Dorsolateral prefrontal cortex (tissue), 120 donors: ENCODE measurements at regions of chr1 and their contacts with region 1.

Region 1: DNA sequence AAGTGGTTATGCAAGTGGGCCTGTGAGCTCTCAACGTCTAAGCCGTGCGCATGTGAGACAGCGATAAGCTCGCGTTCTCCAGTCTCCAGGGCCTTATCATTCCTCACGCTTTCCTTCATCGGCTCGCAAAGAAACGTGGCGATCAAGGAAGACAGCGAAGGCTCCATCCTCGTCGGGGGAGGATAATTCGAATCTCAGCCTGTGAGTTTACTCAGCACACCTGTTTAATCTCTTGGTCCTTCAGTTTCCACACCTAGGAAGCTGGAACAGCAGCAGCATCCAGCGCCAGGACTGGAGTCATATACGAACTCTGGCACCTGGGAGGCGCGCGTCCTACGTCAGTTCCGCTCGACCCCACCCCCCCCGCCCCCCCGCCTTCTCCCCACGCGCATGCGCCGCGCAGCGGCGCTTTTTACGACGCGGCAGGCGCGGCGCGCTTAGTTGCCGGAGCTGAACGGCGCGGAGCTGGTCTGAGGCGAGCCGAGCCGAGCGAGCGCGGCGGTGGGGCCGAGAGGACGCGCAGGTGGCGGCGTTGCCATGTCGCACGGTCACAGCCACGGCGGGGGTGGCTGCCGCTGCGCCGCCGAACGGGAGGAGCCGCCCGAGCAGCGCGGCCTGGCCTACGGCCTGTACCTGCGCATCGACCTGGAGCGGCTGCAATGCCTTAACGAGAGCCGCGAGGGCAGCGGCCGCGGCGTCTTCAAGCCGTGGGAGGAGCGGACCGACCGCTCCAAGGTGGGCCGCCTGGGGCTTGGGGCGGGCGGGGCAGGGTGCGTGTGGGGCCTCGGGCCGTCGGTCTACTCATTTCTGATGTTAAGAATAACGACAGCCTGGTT is at the start of gene PITHD1:
- DNase-seq: peak; percentile 55 to 85 (median 74)
- H3K4me3 ChIP-seq: peak within 1 kb of the TSS; percentile 53 to 100 (median 96)
- H3K27ac ChIP-seq: peak within 1 kb of the TSS in 58 of 59 donors; percentile 17 to 94 (median 85)
- H3K27me3 ChIP-seq: no peaks in the 10 kb centered on the region
- CTCF ChIP-seq: peak in 25 of 56 donors; percentile 3 to 59 (median 19)
- total RNA-seq, gene PITHD1: 72.3 to 213 (median 157) TPM

Region 2: GRCh38 chr1:23743287-23744052 is 34.7 kb before region 1 on chr1 and contains the start of gene ELOA:
- intact Hi-C with region 1: loop called in 1 of 2 experiments (anchors 5 kb)
- DNase-seq: peak; percentile 50 to 84 (median 64)
- H3K4me3 ChIP-seq: peak within 1 kb of the TSS; percentile 55 to 99 (median 92)
- H3K27ac ChIP-seq: peak within 1 kb of the TSS in 58 of 59 donors; percentile 43 to 96 (median 86)
- H3K27me3 ChIP-seq: no peaks in the 10 kb centered on the region
- CTCF ChIP-seq: peak in 9 of 56 donors; percentile 7 to 43 (median 26)
- total RNA-seq, gene ELOA: 22.2 to 40.6 (median 28.2) TPM

Region 3: GRCh38 chr1:23791516-23792047 is 13.4 kb after region 1 on chr1:
- intact Hi-C with region 1: loop called in 1 of 2 experiments (anchors 2 kb)
- DNase-seq: peak in 1 of 10 donors; percentile 42
- H3K4me3 ChIP-seq: peak overlapping the region; percentile 55 to 91 (median 76)
- H3K27ac ChIP-seq: peak overlapping the region in 54 of 59 donors; percentile 16 to 84 (median 69)
- H3K27me3 ChIP-seq: no peaks in the 10 kb centered on the region
- CTCF ChIP-seq: no peak

Region 4: DNA sequence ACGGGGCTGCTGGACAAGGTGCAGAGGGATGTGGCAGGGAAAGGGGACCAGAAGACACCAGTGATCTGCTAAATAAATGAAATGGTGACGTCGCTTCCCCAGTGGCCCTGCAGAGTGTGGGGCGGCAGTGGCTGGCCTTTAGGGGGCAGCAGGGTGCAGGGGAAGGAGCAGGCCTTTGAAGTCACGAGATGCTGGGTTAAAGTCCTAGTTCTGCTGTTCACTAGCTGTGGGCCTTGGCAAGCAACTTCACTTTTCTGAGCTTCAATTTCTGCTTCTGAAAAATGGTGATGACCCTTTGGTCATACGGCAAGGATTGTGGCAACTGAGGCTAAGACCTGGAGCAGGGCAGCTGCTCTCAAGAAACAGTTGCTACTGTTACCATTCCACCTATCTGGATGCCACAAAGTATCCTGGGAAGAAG is 31.6 kb after region 1 on chr1:
- intact Hi-C with region 1: no loop called
- DNase-seq: peak in 2 of 10 donors; percentile 42 to 64
- H3K4me3 ChIP-seq: no peak overlapping the region
- H3K27ac ChIP-seq: peak overlapping the region in 29 of 59 donors; percentile 2 to 64 (median 44)
- H3K27me3 ChIP-seq: no peaks in the 10 kb centered on the region
- CTCF ChIP-seq: peak; percentile 42 to 81 (median 69)